Caco-2 (cell line): ENCODE measurements at regions of chr11 and their contacts with region 1.

Region 1: DNA sequence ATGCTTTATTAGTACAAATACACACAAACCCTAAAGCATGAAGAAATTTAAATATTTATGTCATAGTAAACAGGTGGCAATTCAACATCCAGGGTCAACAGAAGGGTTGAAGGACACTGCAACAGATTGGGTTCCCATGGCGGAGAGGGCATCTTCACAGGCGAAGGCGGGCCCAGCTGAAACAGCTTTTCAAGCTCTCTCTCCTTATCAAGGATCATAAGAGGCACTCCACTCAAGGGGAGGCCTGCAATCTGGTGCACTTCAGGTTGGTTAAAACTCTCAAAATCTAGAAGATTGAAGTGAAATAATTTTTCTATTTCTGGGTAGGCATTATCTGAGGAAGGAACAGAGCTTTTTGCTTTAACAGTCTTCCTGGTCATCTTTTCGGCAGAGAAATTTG is 16.8 kb upstream of the SLC22A8 start:
- DNase-seq: no peak
- H3K4me3 ChIP-seq: no peak overlapping the region
- H3K4me3 Mint-ChIP-seq: no peak overlapping the region
- H3K27ac Mint-ChIP-seq: no peak overlapping the region
- H3K4me1 ChIP-seq: peaks cover 6% of the 10 kb centered on the region
- H3K4me1 Mint-ChIP-seq: no peaks in the 10 kb centered on the region
- H3K27me3 ChIP-seq: no peaks in the 10 kb centered on the region
- H3K27me3 Mint-ChIP-seq: peaks cover 9% of the 10 kb centered on the region
- CTCF ChIP-seq: no peak

Region 2: DNA sequence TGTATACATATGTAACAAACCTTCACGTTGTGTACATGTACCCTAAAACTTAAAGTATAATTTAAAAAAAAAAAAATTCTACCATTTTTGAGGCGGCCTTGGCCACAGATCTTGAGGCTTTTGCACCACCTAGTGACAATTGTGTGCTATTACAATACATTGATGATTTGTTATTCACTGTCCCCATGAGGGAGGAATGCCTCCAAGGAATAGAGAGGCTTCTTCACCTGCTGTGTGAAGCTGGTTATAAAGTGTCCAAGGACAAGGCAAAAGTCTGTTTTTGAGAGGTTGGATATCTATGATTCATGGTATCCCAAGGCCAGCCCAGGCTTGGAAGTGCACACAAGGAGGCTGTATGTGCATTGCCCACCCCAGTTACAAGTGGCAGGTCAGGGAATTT is 180.3 kb after region 1 on chr11:
- CTCF ChIA-PET with region 1: no interaction called
- POLR2A ChIA-PET with region 1: no interaction called
- intact Hi-C with region 1: loop called (anchors 1 kb)
- DNase-seq: peak in 1 of 2 experiments; percentile 57
- H3K4me3 ChIP-seq: no peak overlapping the region
- H3K4me3 Mint-ChIP-seq: no peak overlapping the region
- H3K27ac Mint-ChIP-seq: no peak overlapping the region
- H3K4me1 ChIP-seq: no peaks in the 10 kb centered on the region; the same call in 1 of the 2 replicates
- H3K4me1 Mint-ChIP-seq: no peaks in the 10 kb centered on the region
- H3K27me3 ChIP-seq: no peaks in the 10 kb centered on the region
- H3K27me3 Mint-ChIP-seq: peaks cover 3% of the 10 kb centered on the region
- CTCF ChIP-seq: peak; percentile 55 to 57